Posterior cingulate gyrus (tissue), 11 donors: ENCODE measurements at regions of chr15 and their contacts with region 1.

Region 1: DNA sequence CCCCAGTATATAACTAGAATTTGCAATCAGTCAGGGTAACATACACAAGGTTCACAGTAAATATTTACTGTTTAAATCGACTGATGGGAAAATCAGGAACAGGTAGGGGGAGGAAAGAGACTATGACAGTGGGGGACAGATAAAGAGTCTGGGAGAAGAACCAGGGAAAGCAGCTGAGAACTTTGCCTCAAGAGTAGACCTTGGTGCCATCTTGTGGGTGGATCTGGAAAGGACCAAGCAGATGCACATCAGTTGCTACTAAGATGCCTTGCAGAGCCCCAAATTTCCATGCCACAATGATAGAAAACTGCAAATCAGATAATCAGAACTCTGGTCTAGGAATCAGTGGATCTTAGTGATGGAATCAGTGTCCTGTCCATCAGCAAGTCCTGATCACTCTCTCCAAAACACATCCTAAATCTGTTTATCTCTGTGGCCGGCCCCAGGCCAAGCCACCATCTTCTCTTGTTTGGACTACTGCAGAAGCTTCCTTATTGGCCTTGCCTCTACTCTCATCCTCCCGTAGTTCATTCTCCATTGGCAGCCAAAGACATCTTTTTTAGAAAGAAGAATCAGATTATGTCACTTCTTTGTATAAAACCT is 62.7 kb downstream of the PDE8A start:
- DNase-seq: peak in 7 of 10 donors; percentile 54 to 90 (median 70)

Region 2: DNA sequence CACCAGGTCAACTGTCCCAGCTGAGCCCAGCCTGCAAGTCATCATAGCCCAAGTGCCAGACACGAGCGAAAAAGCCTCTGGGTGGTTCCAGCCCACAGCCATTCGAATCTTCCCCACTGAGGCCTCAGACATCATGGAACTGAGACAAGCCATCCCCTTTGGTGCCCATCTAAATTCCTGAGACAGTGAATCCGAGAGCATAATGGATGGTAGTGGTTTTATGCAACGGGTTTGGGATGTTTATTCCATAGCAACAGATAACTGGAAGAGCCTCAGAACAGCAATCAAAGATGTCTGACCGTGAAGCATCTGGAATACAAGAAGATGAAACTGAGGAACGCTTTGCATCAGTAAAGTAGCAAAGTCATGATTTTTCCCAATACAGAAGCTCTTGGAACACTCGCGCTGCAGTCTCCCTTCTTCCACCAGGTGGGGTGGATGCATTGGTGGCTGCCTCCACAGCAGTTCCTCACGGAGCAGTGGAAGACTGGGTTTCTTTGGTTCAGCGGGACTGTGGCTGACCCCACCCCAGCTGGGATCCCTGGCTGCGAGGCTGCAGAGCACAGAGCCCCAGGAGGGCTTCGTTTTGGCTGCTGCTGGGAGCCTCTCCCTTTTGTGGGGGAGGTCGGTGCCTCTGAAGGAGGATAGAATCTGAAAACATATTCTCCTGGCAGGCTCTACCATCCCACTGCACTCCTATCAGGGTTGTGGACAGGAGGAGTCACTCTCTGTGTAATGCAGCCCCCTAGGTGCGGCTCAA is 89.1 kb before region 1 on chr15:
- intact Hi-C with region 1: loop called (anchors 1 kb)
- DNase-seq: peak; percentile 56 to 97 (median 80)

Region 3: GRCh38 chr15:84981054-84981710 is 63.2 kb before region 1 on chr15:
- intact Hi-C with region 1: loop called (anchors 5 kb)
- DNase-seq: peak; percentile 87 to 99 (median 92)

Region 4: GRCh38 chr15:85010386-85011159 is 33.8 kb before region 1 on chr15:
- intact Hi-C with region 1: no loop called
- DNase-seq: no peak

Region 5: DNA sequence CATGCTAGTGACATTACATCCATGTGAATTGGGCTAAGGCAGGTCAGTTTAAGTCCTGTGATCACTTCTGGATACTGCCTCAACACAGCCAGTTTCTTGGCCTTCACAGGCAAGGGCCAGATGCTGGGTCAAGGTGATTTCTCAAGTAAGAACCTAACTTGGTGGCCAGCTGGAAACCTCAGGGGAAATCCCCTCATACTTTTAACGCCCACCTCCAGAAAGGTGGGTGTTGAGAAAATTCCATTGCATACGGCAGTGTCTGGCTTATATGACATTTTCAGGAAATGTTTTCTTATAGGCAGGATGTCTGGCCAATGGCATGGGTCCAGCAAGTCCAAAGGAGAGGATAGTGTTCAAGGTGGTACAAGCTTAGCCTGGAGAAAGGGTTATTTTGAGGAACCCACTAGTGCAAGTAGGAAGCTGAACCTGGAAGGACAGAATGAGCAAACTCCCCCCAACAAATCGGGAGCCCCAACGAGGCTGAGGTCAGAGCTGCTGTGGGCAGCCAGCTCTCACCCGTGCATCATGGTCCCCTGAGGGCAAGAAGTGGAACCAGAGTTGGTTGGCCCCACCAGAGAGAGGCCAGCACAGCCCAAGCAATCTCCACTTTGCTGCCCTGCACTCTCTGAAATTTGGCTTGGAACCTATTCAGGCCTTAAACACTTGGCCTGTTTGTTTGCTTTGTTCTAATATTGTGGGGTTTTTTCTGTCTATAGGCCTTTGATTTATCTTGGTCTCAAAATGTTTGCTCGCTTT is 72.8 kb after region 1 on chr15:
- intact Hi-C with region 1: loop called (anchors 10 kb)
- DNase-seq: peak in 1 of 10 donors; percentile 45